CD4-positive, alpha-beta memory T cell (primary cell): ENCODE measurements at regions of chr13 and their contacts with region 1.

Region 1: GRCh38 chr13:30114571-30115256 is 192.6 kb downstream of the KATNAL1 start:
- DNase-seq: peak; percentile 89 to 91 (median 90)
- H3K4me3 ChIP-seq: peak overlapping the region in 1 of 2 donors; percentile 30
- H3K4me3 Mint-ChIP-seq: peak overlapping the region; percentile 80 to 88 (median 86)
- H3K27ac ChIP-seq: peak overlapping the region; percentile 22
- H3K27ac Mint-ChIP-seq: peak overlapping the region; percentile 64 to 94 (median 85)
- H3K4me1 ChIP-seq: peaks cover 29% of the 10 kb centered on the region
- H3K4me1 Mint-ChIP-seq: peaks cover 18 to 47% (median 34%) of the 10 kb centered on the region in 4 donors
- H3K27me3 ChIP-seq: no peaks in the 10 kb centered on the region
- H3K27me3 Mint-ChIP-seq: no peaks in the 10 kb centered on the region

Region 2: GRCh38 chr13:29595380-29596063 is 519.2 kb before region 1 on chr13 and contains the start of gene SLC7A1:
- CTCF ChIA-PET with region 1: interaction called, 3 read pairs
- POLR2A ChIA-PET with region 1: interaction called, 3 read pairs
- intact Hi-C with region 1: loop called (anchors 1 kb)
- DNase-seq: peak; percentile 80 to 90 (median 88)
- H3K4me3 ChIP-seq: peak within 1 kb of the TSS; percentile 59 to 61
- H3K4me3 Mint-ChIP-seq: peak within 1 kb of the TSS; percentile 87 to 94 (median 92)
- H3K27ac ChIP-seq: peak within 1 kb of the TSS; percentile 66
- H3K27ac Mint-ChIP-seq: peak within 1 kb of the TSS; percentile 90 to 97 (median 93)
- H3K4me1 ChIP-seq: peaks cover 25% of the 10 kb centered on the region
- H3K4me1 Mint-ChIP-seq: peaks cover 22 to 49% (median 34%) of the 10 kb centered on the region in 4 donors
- H3K27me3 ChIP-seq: no peaks in the 10 kb centered on the region
- H3K27me3 Mint-ChIP-seq: peaks cover 0 to 1% of the 10 kb centered on the region in 2 donors
- total RNA-seq, gene SLC7A1: 38.6 to 42.6 TPM

Region 3: DNA sequence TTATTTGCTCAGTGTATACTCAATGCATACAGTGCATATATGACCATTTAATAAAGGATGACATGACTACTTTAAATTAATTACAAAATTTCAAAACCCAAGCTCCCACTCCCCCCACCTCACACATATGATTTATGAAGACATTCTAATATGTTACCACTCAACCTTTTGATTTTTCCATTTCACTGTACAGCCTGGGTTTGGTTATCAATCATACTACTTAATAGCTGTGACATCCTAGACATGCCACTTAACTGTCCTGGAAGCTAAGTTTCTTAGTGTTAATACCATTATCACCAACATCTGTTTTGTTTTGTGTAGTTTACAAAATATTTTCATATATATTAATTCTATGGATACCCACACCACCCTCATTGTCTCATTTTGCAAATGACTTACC is 306.4 kb before region 1 on chr13:
- CTCF ChIA-PET with region 1: interaction called, 11 read pairs
- POLR2A ChIA-PET with region 1: no interaction called
- intact Hi-C with region 1: no loop called
- DNase-seq: no peak
- H3K4me3 ChIP-seq: no peak overlapping the region
- H3K4me3 Mint-ChIP-seq: peak overlapping the region in 2 of 8 donors; percentile 22 to 23
- H3K27ac ChIP-seq: no peak overlapping the region
- H3K27ac Mint-ChIP-seq: no peak overlapping the region
- H3K4me1 ChIP-seq: peaks cover 53% of the 10 kb centered on the region
- H3K4me1 Mint-ChIP-seq: peaks cover 39 to 51% (median 47%) of the 10 kb centered on the region in 4 donors
- H3K27me3 ChIP-seq: no peaks in the 10 kb centered on the region
- H3K27me3 Mint-ChIP-seq: no peaks in the 10 kb centered on the region

Region 4: DNA sequence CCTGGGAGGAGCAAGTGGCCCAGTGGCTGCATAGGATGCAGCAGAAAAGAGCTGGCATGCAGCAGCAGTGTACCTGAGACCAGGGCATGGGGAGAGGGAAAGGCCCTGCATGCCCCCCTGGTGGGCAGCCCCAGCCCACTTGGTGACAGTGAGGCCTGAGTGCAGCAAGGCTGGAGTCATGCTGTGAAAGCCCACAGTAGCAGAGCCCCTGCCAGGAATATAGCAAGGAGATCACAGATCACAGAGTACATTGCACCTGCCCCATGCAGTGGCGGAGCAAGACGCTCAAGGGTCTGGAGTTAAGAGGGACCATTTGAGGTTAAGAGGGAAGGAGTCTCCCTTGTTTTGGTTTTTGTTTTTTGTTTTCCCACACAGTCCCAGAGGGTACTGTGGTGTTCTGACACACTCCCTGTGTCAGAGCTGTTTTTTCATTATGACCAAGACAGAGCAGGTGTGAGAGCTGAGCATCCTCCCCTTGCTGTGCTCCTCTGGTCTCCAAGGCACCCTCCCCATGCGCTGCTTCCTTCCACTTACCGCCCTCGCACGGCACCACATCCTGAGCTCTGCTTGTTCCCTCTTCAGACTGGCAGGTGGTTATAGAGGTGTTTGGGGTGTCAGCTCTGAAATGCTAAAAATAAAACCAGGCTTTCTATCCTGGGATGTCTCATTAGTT is 179.3 kb before region 1 on chr13:
- CTCF ChIA-PET with region 1: interaction called, 258 read pairs
- POLR2A ChIA-PET with region 1: interaction called, 100 read pairs
- intact Hi-C with region 1: loop called (anchors 1 kb)
- DNase-seq: peak; percentile 80 to 86 (median 84)
- H3K4me3 ChIP-seq: peak overlapping the region; percentile 72 to 82
- H3K4me3 Mint-ChIP-seq: peak overlapping the region; percentile 86 to 96 (median 94)
- H3K27ac ChIP-seq: peak overlapping the region; percentile 59
- H3K27ac Mint-ChIP-seq: peak overlapping the region; percentile 86 to 97 (median 92)
- H3K4me1 ChIP-seq: peaks cover 64% of the 10 kb centered on the region
- H3K4me1 Mint-ChIP-seq: peaks cover 46 to 77% (median 64%) of the 10 kb centered on the region in 4 donors
- H3K27me3 ChIP-seq: no peaks in the 10 kb centered on the region
- H3K27me3 Mint-ChIP-seq: peaks cover 0 to 2% of the 10 kb centered on the region in 2 donors

Region 5: GRCh38 chr13:30132623-30133553 is 18.2 kb after region 1 on chr13:
- CTCF ChIA-PET with region 1: interaction called, 27 read pairs
- POLR2A ChIA-PET with region 1: interaction called, 4 read pairs
- intact Hi-C with region 1: no loop called
- DNase-seq: peak; percentile 91 to 95 (median 93)
- H3K4me3 ChIP-seq: no peak overlapping the region
- H3K4me3 Mint-ChIP-seq: peak overlapping the region in 6 of 8 donors; percentile 17 to 78 (median 63)
- H3K27ac ChIP-seq: no peak overlapping the region
- H3K27ac Mint-ChIP-seq: peak overlapping the region in 6 of 7 donors; percentile 22 to 88 (median 82)
- H3K4me1 ChIP-seq: peaks cover 12% of the 10 kb centered on the region
- H3K4me1 Mint-ChIP-seq: peaks cover 10 to 19% (median 14%) of the 10 kb centered on the region in 4 donors
- H3K27me3 ChIP-seq: no peaks in the 10 kb centered on the region
- H3K27me3 Mint-ChIP-seq: no peaks in the 10 kb centered on the region

Region 6: GRCh38 chr13:30158774-30159445 is 44.2 kb after region 1 on chr13:
- CTCF ChIA-PET with region 1: interaction called, 51 read pairs
- POLR2A ChIA-PET with region 1: interaction called, 5 read pairs
- intact Hi-C with region 1: loop called (anchors 1 kb)
- DNase-seq: peak in 4 of 5 donors; percentile 58 to 61 (median 60)
- H3K4me3 ChIP-seq: no peak overlapping the region
- H3K4me3 Mint-ChIP-seq: peak overlapping the region in 7 of 8 donors; percentile 17 to 69 (median 59)
- H3K27ac ChIP-seq: no peak overlapping the region
- H3K27ac Mint-ChIP-seq: peak overlapping the region in 5 of 7 donors; percentile 7 to 89 (median 74)
- H3K4me1 ChIP-seq: peaks cover 39% of the 10 kb centered on the region
- H3K4me1 Mint-ChIP-seq: peaks cover 26 to 61% (median 41%) of the 10 kb centered on the region in 4 donors
- H3K27me3 ChIP-seq: no peaks in the 10 kb centered on the region
- H3K27me3 Mint-ChIP-seq: no peaks in the 10 kb centered on the region